Activated CD4-positive, alpha-beta memory T cell treated with anti-CD3 and anti-CD28 coated beads for 36 hours (primary cell): ENCODE measurements at regions of chr6 and their contacts with region 1.

Region 1: DNA sequence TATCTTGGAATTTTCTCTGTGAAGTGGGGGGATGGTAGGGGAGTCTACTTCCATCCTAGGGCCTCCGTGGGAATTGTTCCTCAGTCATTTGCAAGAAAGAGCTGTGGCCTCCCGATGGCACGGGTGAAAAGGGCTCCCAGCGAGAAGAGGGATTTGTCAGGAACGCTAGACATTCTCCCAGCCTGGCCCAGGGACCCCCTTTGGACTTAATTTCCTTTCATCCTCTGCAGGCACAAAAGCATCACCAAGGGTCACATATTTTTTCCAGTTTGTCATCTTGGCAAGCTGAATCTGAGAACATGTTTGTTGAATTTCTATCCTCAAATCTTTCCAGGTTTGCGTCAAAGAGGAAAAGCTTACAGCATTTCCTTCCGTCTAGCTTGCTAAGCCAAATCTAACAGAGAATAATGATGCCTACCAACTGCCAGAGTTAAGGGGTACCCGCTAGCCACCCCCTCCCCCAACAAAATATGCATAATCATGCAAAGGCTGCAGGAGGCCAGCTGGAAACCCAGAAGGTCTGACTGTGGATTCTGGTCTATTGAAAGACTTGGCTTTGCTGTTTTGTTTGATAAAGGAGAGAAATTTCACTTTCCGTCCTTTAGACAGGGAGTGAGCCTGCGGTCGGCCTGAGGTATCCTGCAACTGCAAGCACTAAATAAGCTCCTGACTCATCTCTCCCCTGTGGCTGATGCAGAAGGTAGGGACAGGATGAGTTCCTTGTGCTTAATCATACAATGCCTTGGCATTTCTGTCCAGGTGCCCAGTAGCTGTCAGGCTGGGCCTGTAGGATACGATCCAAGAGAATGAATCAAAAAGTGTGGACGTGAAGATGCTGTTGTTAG is 23.1 kb downstream of the PSMG4 start:
- DNase-seq: no peak
- H3K4me3 Mint-ChIP-seq: no peak overlapping the region
- H3K27ac Mint-ChIP-seq: no peak overlapping the region
- H3K4me1 Mint-ChIP-seq: no peaks in the 10 kb centered on the region
- H3K27me3 Mint-ChIP-seq: no peaks in the 10 kb centered on the region

Region 2: DNA sequence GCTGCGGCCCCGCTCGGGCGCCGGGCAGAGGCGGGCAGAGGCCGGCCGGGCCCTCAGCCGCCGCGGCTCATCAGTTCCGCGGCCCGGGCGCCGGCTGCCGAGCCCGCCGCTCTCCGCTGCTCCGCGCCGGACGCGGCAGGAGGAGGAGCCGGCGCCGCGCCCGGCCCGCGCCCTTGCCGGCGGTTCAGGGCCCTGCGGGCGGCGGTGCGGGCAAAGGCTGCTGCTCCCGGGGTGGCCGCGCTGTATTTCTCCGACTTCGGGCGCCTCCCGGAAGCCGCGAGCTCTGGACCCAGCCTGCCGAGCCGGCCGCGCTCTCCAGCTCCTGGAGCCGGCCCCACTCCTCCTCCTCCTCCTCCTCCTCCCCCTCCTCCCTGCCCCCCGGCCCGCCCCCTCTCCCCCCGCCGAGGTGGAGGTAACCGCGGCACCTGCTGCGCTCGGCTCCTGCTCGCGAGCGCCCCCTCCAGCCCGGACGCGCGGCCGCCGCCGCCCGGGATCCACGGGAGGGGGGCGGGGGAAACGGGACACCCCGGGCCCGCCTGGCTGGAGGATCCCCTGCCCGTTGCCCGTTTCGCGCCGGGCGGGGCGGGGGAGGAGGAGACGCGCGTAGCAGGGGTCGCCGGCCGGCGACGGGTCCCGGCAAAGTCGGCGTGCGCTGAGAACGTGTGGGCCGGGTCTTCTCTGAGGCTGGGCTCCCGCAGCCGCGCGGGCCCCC is 175.1 kb after region 1 on chr6 and contains the start of gene SLC22A23:
- CTCF ChIA-PET with region 1: interaction called, 3 read pairs
- POLR2A ChIA-PET with region 1: no interaction called
- intact Hi-C with region 1: loop called (anchors 5 kb)
- DNase-seq: peak; percentile 79
- H3K4me3 Mint-ChIP-seq: peak within 1 kb of the TSS; percentile 71
- H3K27ac Mint-ChIP-seq: no peak within 1 kb of the TSS
- H3K4me1 Mint-ChIP-seq: peaks cover 7% of the 10 kb centered on the region
- H3K27me3 Mint-ChIP-seq: peaks cover 7% of the 10 kb centered on the region
- total RNA-seq, gene SLC22A23: 0.90 to 1.0 TPM

Region 3: DNA sequence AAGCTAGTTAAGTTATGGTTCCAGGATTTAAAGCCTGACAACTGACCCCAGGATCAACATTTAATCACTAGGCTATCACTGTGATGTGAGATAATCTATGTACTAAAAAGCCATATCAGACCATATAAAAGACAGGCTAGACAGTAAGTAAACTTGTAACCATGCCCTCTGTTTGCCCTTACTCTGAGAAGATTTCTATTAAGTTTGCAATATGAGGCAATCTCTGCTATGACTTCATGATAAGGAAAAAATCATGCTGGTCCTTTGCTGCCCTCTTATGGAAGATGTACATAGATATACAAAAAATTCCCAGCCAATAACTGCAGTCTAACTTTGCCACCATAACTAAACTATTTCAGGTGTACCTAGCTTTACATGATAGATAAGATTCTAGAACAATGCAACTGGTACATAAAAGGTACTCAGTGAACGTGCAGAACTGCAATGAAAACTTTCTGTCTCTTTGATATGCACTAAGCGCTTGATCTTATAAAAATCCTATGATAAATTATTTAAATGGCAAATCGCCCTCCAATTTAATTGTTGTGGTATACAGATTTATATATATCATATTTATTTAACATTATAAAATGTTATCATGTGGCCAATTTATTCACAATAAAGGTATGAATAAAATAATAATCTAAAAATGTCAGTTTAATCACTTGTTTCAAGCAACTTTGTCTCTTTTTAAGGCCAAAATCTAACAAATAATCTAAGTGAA is 726.6 kb after region 1 on chr6:
- CTCF ChIA-PET with region 1: no interaction called
- POLR2A ChIA-PET with region 1: no interaction called
- intact Hi-C with region 1: loop called (anchors 10 kb)
- DNase-seq: no peak
- H3K4me3 Mint-ChIP-seq: no peak overlapping the region
- H3K27ac Mint-ChIP-seq: no peak overlapping the region
- H3K4me1 Mint-ChIP-seq: peaks cover 53% of the 10 kb centered on the region
- H3K27me3 Mint-ChIP-seq: no peaks in the 10 kb centered on the region